ENCODE measurements at regions of chr19 and their contacts with region 1.

Region 1: DNA sequence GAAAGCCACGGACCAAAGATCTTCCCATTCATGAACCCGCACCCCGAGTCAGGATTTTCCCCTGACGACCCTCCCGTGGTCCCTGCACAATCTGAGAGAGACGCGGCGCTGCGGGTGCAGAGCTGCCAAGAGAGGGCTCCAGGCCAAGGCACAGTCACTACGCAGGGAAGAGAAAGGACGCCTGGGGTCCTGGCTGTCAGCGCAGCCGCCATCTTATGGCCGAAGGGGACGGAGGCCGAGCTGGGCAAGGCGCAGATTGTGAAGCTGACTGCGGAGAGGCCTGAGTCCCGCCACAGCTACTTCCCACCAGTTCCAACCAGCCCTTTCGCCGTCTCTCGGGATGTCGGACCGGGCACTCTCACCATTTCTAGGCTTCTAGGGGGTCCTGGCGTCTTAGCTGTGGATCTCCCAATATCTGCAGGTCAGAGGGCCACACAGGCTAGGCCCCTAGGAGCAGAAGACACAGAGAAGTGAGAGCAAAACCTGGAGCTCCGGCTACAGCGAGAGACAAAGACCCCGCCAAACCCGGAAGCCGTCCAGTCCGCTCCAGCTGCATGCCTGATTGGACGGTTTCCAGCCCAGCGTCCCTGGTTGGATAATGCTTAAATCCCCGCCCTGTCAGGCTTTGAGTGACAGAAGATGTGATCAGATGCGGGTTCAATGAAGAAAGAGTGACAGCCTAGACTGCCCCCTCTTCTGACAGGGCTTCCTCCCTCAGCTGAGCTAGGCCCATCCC is at the start of gene ZNF100:
- DNase-seq: peak; percentile 98
- ATAC-seq: peak; percentile 98 to 99
- total RNA-seq, gene ZNF100: 7.2 to 9.2 TPM

Region 2: GRCh38 chr19:21519488-21519887 is 247.7 kb before region 1 on chr19:
- intact Hi-C with region 1: no loop called
- DNase-seq: no peak
- ATAC-seq: no peak

Region 3: DNA sequence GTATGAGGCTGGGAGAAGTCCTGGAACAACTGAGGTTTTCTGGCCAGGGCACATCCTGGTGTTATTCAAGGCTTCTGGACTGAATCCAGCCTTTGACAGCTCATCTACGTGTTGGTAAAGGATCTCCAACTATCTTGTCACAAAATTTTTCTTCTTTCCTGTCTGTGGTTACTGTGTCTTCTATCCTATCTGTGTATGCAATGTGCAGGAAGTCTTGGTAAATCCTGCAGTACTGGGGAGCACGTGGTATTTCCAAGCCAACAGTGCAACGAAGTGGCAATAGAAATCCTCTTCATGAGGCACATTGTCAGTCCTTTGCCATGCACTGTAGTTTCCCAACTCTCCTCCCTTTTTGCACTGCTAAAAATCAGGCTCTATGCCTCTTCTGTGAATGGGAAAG is 86.6 kb before region 1 on chr19:
- intact Hi-C with region 1: no loop called
- DNase-seq: no peak
- ATAC-seq: no peak

Region 4: DNA sequence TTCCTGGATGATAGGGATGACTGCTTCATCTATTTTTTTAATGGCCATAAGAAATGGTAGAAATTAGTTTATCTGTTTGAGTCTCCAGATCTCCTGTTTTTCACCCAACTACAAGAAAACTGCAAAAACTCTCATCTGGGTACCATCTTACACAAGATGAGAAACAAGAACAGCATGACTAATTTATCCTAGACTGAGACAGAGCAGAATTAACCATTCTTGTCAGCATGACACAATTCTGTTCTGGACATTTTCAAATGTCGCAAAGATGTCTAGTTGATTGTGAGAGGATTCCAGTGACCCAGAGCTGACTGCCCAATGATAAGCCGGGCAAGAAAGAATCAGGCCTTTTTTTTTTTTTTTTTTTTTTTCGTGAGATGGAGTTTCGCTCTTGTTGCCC is 56.0 kb after region 1 on chr19:
- intact Hi-C with region 1: no loop called
- DNase-seq: no peak
- ATAC-seq: no peak

Region 5: DNA sequence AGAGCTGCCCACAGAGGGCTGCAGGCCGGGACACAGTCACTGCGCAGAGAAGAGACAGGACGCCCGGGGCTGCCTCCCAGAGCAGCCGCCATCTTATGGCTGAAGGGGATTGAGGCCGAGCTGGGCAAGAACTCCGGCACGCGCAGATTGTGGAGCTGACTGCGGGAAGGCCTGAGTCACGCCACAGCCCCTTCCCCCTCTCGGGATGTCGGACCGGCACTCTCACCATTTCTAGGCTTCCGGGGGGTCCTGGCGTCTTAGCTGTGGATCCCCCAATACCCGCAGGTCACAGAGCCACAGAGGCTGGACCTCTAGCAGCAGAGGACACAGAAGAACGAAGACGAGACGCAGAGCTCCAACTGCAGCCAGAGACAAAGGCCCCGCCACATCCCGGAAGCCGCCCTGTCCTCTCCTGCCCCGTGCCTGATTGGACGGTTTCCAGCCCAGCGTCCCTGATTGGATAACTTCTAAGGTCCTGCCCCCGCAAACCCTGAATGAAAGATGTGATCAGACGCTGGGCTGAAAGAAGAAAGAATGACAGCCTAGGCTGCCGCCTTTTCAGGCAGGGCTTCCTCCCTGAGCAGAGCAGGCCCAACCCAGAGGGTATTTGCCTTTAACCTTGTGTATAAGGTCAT is 68.7 kb after region 1 on chr19 and contains the start of gene ZNF43:
- intact Hi-C with region 1: loop called in 1 of 2 experiments (anchors 5 kb)
- DNase-seq: peak; percentile 99
- ATAC-seq: peak; percentile 98 to 99
- total RNA-seq, gene ZNF43: 6.5 to 8.6 TPM

Measured in left cardiac atrium (tissue), 4 donors.